ENCODE measurements at regions of chr18 and their contacts with region 1.

Region 1: DNA sequence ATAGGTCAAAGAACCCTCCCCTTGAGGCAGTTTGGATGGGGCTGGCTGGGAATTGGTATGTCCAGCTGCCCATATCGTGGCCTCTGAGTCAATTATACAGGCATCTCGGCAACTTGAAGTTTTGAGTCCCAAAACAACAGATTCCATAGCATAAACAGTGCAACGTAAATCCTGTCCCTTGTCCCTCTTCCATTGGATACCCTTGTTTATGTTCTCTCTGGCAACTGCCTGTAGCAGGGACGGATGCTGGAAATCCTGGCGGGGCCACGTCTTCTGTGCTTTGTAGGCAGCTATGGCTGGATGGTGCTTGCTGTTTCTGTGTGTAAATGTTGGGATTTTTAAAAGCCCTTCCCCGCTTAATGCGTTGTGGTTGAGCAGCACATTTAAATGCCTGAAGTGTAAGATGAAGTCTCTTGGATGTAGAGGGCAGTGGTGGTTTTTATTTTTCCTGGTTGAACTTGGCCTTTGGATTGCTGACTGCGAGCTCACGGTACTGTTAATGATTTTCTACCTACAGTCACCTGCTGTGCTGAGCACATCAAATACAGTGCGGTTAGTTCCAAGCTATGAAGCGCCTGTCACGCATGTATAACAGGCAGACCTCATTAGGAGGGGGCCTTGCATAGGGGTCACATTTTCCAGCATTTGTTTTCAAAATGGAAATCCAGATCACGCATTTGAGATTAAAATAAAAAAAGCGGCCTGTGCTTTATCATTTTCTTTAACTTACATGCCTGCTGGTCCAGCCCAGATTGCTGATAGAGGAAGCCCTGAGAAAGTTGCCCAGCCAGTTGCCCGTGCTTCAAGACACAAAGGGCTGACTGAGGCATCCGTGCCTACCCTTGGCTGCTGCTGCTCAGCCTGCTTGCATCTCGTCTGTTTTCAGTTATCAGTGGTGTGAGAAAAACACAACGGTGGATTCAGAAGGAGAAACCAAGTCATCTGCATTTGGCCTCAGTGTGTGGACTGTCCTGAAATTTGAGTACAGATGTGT is 84.7 kb downstream of the NEDD4L start:
- DNase-seq: no peak
- H3K4me3 ChIP-seq: no peak overlapping the region
- H3K27ac ChIP-seq: no peak overlapping the region
- H3K4me1 ChIP-seq: no peaks in the 10 kb centered on the region
- CTCF ChIP-seq: no peak

Region 2: DNA sequence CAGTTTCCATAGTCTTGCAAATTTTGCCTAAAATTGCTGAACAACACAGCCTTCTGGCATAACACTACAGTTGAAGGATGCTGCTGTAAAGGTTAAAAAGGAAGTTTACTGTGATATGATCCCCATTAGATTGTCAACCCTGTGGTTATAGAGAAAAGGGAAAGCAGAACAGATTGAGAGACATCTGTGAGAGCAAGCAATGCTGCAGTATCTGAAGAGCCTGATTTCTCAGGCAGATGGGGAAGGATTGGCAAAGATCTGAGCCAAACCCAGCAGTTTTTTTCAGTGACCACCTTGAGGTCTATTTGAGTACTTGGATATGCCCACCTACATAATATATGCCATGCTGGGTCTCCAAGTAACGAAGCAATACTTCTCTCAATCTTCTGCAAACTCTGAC is 784.8 kb before region 1 on chr18:
- CTCF ChIA-PET with region 1: no interaction called
- POLR2A ChIA-PET with region 1: no interaction called
- intact Hi-C with region 1: no loop called
- DNase-seq: no peak
- H3K4me3 ChIP-seq: no peak overlapping the region
- H3K27ac ChIP-seq: no peak overlapping the region
- H3K4me1 ChIP-seq: no peaks in the 10 kb centered on the region
- CTCF ChIP-seq: no peak

Region 3: DNA sequence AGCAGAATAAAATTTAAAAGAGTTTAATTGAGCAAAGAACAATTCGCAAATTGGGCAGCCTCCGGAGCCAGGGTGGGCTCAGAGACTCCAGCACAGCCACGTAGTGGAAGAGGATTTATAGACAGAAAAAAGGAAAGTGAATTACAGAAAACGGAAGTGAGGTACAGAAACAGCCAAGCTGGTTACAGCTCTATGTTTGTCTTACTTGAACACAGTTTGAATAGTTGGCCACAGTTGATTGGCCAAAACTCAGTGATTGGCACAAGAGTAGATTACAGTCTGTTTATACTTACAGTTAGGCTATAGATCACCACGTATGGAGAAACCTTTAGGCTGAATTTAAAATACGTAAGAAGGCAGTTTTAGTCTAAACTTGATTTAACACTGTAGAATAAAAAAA is 163.4 kb before region 1 on chr18:
- CTCF ChIA-PET with region 1: no interaction called
- POLR2A ChIA-PET with region 1: no interaction called
- intact Hi-C with region 1: loop called (anchors 10 kb)
- DNase-seq: no peak
- H3K4me3 ChIP-seq: no peak overlapping the region
- H3K27ac ChIP-seq: no peak overlapping the region
- H3K4me1 ChIP-seq: no peaks in the 10 kb centered on the region
- CTCF ChIP-seq: no peak

Region 4: GRCh38 chr18:58015065-58015780 is 113.5 kb before region 1 on chr18:
- CTCF ChIA-PET with region 1: no interaction called
- POLR2A ChIA-PET with region 1: no interaction called
- intact Hi-C with region 1: no loop called
- DNase-seq: peak; percentile 48
- H3K4me3 ChIP-seq: no peak overlapping the region
- H3K27ac ChIP-seq: no peak overlapping the region
- H3K4me1 ChIP-seq: peaks cover 15% of the 10 kb centered on the region
- CTCF ChIP-seq: no peak

Region 5: GRCh38 chr18:58037163-58037562 is 91.5 kb before region 1 on chr18:
- CTCF ChIA-PET with region 1: no interaction called
- POLR2A ChIA-PET with region 1: no interaction called
- intact Hi-C with region 1: no loop called
- DNase-seq: no peak
- H3K4me3 ChIP-seq: no peak overlapping the region
- H3K27ac ChIP-seq: no peak overlapping the region
- H3K4me1 ChIP-seq: no peaks in the 10 kb centered on the region
- CTCF ChIP-seq: no peak

Region 6: DNA sequence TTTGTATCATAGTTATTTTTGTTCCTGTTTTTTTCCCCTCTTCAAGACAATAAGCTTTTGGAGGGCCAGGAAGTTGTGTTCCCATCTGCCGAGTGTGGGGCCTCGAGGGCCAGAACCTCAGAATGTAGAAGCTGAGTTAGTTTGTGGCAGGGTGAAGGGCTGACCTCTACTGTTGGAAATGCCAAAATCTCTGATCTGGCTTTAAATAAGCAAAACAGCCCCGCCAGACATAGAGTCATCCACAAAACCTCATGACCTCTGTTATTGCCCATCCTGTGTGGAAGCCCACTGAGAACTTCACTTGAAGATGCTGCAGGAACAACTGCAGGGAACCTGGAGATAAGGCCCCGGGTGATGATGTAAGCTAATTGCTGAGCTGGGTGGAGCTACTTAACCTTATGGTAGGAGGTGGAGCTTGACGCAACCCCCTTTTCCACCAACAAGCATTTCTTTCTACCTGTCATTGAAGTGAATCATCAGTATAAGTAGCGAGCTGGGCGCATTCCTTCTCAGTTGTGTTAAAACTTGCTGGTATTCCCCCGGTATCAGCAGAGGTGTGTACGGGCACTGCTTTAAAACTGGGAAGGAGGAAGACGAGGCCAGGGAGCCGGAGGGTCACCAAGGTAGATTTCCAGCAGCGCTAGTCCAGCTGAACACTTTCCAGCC is 92.5 kb after region 1 on chr18:
- CTCF ChIA-PET with region 1: no interaction called
- POLR2A ChIA-PET with region 1: no interaction called
- intact Hi-C with region 1: no loop called
- DNase-seq: no peak
- H3K4me3 ChIP-seq: no peak overlapping the region
- H3K27ac ChIP-seq: no peak overlapping the region
- H3K4me1 ChIP-seq: no peaks in the 10 kb centered on the region
- CTCF ChIP-seq: no peak

Measured in OCI-LY7 (cell line).